Heart right ventricle (tissue), 16 donors: ENCODE measurements at regions of chr12 and their contacts with region 1.

Region 1: DNA sequence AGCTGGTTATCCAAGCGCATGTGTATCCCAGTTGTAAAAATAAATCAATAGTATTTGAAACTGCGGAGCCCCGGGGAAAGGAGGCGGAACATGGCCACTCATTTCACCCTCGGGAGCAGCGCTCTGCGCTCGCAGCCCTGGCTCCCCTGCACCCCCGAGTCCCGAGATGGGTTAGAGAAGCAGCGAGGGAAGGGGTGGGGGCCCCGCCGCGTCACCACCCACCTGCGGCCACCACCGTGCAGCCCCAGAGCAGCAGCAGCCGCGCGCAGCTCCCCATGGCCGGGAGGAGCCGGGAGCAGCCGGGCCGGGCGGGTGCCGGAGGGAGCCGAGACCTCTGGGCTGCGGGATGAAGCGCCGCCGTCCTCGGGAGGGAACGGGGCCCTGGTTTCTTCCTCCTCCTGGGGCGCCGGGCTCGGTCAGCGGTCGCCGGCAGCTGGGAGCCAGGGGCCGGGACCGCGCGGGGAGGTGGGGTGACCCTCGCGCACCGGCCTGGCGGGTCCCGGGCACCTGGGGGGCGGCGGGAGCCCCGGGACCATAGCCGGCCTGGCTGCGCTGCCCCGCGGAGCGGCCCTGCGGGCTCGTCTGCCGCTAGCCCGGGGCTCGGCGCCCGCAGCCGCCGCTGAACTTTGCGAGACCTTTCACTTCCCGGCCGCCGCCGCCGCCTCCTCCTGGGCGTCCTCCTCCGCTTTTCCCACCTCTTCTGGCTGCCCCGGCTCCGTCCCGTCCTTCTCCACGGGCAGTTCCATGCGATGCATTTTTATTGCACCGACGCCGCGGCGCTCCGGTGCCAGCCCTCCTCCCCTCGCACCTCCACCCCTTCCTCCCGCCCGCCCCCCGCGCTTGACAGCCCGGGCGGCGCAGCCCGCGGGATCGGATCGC is at the start of gene NTN4:
- DNase-seq: peak; percentile 42 to 74
- ATAC-seq: peak; percentile 57 to 78 (median 67)
- H3K4me3 ChIP-seq: peak within 1 kb of the TSS; percentile 55 to 96 (median 85)
- H3K27ac ChIP-seq: peak within 1 kb of the TSS; percentile 70 to 93 (median 90)
- H3K4me1 ChIP-seq: peaks cover 4 to 55% (median 30%) of the 10 kb centered on the region in 9 donors
- H3K27me3 ChIP-seq: peaks cover 0 to 70% (median 0%) of the 10 kb centered on the region in 7 donors
- CTCF ChIP-seq: no peak
- total RNA-seq, gene NTN4: 54.7 to 105 (median 67.7) TPM

Region 2: GRCh38 chr12:95611676-95612309 is 178.5 kb before region 1 on chr12:
- intact Hi-C with region 1: loop called in 1 of 10 experiments (anchors 10 kb)
- DNase-seq: no peak
- ATAC-seq: no peak
- H3K4me3 ChIP-seq: no peak overlapping the region
- H3K27ac ChIP-seq: peak overlapping the region in 3 of 10 donors; percentile 5 to 13 (median 7)
- H3K4me1 ChIP-seq: peaks cover 0 to 51% (median 37%) of the 10 kb centered on the region in 9 donors
- H3K27me3 ChIP-seq: no peaks in the 10 kb centered on the region
- CTCF ChIP-seq: no peak

Region 3: GRCh38 chr12:95674631-95675030 is 115.6 kb before region 1 on chr12:
- intact Hi-C with region 1: loop called in 1 of 10 experiments (anchors 10 kb)
- DNase-seq: peak in 1 of 2 donors; percentile 57
- ATAC-seq: peak in 6 of 8 donors; percentile 50 to 64 (median 57)
- H3K4me3 ChIP-seq: no peak overlapping the region
- H3K27ac ChIP-seq: peak overlapping the region in 4 of 10 donors; percentile 13 to 37 (median 18)
- H3K4me1 ChIP-seq: peaks cover 0 to 27% (median 19%) of the 10 kb centered on the region in 9 donors
- H3K27me3 ChIP-seq: no peaks in the 10 kb centered on the region
- CTCF ChIP-seq: no peak

Region 4: DNA sequence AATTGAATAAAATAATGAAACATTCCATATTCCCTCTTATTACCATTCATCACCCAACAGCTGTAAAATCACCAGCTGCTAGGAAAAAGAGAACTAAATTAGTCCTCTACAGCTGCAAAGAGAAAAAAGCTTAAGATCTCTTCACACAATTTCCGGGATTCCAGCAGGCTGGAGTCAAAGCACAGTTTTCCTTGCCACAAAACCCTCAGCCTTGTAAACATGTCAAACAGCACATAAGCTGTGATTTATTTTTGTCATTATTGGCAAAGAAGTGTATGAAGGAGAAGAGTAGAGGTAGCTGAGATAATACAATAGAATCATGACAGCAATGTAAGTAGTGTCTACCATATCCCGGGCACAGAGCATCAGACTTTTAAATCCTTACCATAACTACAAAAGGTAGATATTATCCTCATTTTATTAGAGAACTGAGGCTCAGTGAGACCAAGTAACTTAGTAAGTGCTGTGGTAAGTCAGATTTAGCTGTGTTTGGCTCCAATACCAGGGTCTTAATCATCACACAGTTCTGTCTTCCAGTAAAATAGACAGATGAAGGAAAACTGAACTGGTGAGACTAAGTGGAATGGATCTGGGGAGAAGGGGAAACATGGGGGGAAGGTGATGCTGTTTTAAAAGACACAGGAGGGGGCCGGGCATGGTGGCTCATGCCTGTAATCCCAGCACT is 57.0 kb before region 1 on chr12:
- intact Hi-C with region 1: loop called in 2 of 10 experiments (anchors 5 kb)
- DNase-seq: no peak
- ATAC-seq: peak in 7 of 8 donors; percentile 20 to 57 (median 30)
- H3K4me3 ChIP-seq: no peak overlapping the region
- H3K27ac ChIP-seq: peak overlapping the region; percentile 16 to 94 (median 62)
- H3K4me1 ChIP-seq: peaks cover 10 to 72% (median 38%) of the 10 kb centered on the region in 9 donors
- H3K27me3 ChIP-seq: no peaks in the 10 kb centered on the region
- CTCF ChIP-seq: no peak

Region 5: DNA sequence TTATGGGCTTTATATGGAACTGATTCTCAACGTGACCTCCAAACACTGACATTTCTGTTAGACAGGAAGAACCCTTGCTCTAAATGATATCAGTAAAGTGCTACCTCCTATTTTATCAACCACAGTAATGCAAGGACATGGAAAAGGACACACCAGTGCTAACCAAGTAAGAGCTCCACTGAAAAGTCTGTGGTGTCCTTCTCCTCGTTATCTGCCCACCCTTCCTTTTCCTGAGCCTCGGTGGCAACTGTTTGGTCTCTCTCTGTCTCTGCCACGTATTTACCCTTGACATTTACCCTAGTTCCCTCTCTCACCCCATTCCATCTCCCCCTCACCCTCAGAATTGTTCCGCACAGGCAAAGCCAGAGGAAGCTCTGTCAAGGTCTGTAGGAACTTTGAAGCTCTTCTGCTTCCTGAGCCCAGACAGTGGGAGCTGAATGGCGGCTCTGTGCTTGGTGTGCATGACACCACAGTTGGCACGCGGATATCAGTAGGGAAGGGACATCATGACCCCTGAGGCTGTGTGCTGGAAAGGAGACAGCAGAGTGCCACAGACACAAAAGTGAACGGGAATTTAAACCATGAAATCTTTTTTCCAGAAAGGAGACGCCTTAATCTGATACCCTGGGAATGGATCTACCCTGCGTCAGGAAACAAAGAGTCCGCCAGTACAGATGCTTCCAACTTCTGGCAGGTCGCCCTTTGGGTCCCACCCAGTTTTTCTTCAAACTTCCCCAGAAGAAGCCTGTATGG is 50.5 kb before region 1 on chr12:
- intact Hi-C with region 1: loop called in 2 of 10 experiments (anchors 5 kb)
- DNase-seq: peak; percentile 67 to 71
- ATAC-seq: peak; percentile 70 to 92 (median 89)
- H3K4me3 ChIP-seq: peak overlapping the region in 3 of 10 donors; percentile 0 to 14 (median 4)
- H3K27ac ChIP-seq: peak overlapping the region; percentile 70 to 94 (median 87)
- H3K4me1 ChIP-seq: peaks cover 14 to 83% (median 43%) of the 10 kb centered on the region in 9 donors
- H3K27me3 ChIP-seq: no peaks in the 10 kb centered on the region
- CTCF ChIP-seq: no peak

Region 6: DNA sequence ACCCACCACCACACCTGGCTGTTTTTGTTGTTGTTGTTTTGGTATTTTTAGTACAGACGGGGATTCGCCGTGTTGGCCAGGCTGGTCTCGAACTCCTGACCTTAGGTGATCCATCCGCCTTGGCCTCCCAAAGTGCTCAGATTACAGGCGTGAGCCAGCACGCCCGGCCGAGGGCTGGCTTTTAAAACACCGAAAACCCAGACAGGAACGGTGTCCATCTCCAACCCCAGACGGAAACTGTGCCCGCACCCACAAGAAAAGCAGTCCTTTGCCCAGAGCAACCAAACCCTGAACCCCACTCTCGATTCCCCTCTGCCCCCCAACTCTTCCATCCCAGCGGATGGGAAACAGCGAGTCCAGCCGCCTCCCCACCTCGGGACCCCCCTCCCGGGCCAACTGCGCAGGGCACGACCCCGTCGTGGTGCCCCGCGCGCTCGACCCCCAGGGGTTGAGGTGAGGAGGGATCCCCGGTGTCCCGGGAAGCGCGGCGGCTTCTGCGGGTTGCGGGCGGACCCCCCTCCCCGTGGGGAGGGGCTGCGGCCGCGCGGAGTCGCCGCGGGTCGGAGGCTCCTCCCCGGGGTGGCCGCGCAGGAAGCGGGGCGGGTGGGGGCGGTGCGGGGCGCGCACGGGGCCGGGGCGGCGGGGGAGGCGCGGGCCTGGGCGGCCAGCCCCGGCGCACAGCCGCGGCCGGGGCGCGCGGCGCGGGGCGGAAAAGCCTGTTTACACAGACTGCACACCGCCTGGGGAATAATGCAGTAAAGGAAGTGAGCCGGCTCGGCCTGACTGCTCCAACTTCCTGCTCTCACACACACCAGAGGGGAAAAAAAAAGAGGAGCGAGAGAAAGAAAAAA is 403.7 kb after region 1 on chr12 and contains the start of gene ELK3:
- intact Hi-C with region 1: no loop called
- DNase-seq: peak; percentile 78 to 84
- ATAC-seq: peak; percentile 69 to 87 (median 80)
- H3K4me3 ChIP-seq: peak within 1 kb of the TSS; percentile 60 to 93 (median 83)
- H3K27ac ChIP-seq: peak within 1 kb of the TSS; percentile 80 to 96 (median 94)
- H3K4me1 ChIP-seq: peaks cover 3 to 45% (median 19%) of the 10 kb centered on the region in 9 donors
- H3K27me3 ChIP-seq: no peaks in the 10 kb centered on the region
- CTCF ChIP-seq: no peak
- total RNA-seq, gene ELK3: 11.7 to 33.0 (median 22.3) TPM